Aorta (tissue), 5 donors: ENCODE measurements at regions of chr3 and their contacts with region 1.

Region 1: GRCh38 chr3:100047455-100048141 is 66.7 kb downstream of the FILIP1L start:
- DNase-seq: peak in 1 of 2 donors; percentile 42
- ATAC-seq: peak; percentile 17
- H3K4me3 ChIP-seq: no peak overlapping the region
- H3K27ac ChIP-seq: peak overlapping the region in 1 of 2 donors; percentile 26
- H3K4me1 ChIP-seq: peaks cover 0 to 4% of the 10 kb centered on the region in 2 donors
- H3K27me3 ChIP-seq: no peaks in the 10 kb centered on the region

Region 2: DNA sequence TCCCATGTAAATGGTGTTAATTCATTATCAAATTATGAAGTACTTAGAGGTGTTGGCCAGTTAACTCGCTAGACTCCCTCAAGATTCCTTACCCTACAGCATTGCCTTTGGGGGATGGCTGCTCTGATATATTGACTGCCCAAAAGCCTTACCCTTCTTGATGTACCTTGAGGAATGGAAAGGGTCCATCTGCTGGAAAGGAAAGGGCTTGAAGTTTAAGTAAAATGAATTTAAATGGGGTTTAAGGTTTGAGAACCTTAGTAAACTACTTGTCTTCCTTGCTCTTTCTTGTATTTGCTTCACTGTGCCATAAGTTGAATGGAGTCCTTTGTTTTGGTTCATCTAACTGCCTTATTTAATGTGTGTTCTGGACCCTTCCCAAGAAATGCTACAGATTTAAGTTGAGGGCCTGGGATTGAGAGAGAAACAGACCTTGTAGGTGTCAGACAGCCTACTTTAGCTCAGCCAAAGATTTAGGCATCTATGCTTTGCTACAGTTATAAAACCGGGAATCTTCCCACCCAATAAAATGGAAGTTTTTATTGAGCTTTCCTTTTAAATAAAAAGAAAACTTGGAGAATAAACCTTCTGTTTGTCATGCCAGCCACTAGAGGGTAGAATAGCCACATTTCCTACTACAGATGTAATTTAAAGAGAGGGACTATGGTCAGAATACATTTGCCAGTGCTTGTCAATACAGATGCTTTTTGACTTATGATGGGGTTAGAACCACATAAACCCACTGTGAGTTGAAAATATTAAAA is 204.6 kb before region 1 on chr3:
- intact Hi-C with region 1: loop called in 1 of 2 experiments (anchors 5 kb)
- DNase-seq: no peak
- ATAC-seq: peak; percentile 70
- H3K4me3 ChIP-seq: no peak overlapping the region
- H3K27ac ChIP-seq: peak overlapping the region; percentile 63 to 91
- H3K4me1 ChIP-seq: peaks cover 2 to 3% of the 10 kb centered on the region in 2 donors
- H3K27me3 ChIP-seq: no peaks in the 10 kb centered on the region

Region 3: GRCh38 chr3:99866261-99866761 is 181.3 kb before region 1 on chr3:
- intact Hi-C with region 1: loop called (anchors 5 to 10 kb)
- DNase-seq: no peak
- ATAC-seq: no peak
- H3K4me3 ChIP-seq: peak overlapping the region; percentile 31 to 59
- H3K27ac ChIP-seq: peak overlapping the region; percentile 51 to 93
- H3K4me1 ChIP-seq: peaks cover 9 to 22% of the 10 kb centered on the region in 2 donors
- H3K27me3 ChIP-seq: no peaks in the 10 kb centered on the region

Region 4: GRCh38 chr3:99875929-99876841 is 171.4 kb before region 1 on chr3:
- intact Hi-C with region 1: loop called in 1 of 2 experiments (anchors 10 kb)
- DNase-seq: peak; percentile 91 to 94
- ATAC-seq: peak; percentile 94
- H3K4me3 ChIP-seq: peak overlapping the region; percentile 68 to 94
- H3K27ac ChIP-seq: peak overlapping the region; percentile 82 to 94
- H3K4me1 ChIP-seq: no peaks in the 10 kb centered on the region
- H3K27me3 ChIP-seq: no peaks in the 10 kb centered on the region

Region 5: DNA sequence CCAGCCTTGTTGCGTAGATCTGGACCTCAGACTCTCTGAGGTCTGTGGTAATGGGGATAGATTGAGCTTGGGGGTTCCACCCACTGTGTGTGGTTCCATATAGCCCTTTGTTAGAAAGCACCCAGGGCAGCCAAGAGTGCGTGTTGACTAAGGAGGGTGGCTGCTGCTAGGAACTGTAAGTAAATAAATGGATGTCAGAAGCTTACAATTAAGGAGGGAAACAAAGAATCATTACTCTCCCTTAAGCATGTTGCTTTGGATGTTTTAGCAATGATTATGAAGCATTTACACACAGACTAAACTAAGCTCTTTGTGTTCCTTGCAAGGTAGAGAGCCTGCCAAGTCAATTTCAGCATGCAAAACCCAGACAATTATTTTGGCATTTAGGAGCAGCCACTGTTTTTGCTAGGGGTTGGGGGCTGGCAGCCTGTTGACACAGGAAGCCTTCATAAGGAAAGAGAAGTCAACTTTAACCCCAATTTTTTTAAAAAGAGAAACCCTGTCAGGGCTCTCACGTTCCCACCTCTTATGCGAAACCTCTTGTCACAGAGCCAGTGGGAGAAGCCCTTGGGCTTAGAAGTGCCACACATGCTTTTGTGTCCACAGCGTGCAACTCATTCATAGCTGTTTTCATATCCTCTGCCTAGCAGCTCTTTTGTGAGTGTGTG is 102.1 kb before region 1 on chr3:
- intact Hi-C with region 1: loop called (anchors 5 kb)
- DNase-seq: peak in 1 of 2 donors; percentile 53
- ATAC-seq: peak; percentile 37
- H3K4me3 ChIP-seq: no peak overlapping the region
- H3K27ac ChIP-seq: peak overlapping the region; percentile 90 to 98
- H3K4me1 ChIP-seq: peaks cover 2 to 5% of the 10 kb centered on the region in 2 donors
- H3K27me3 ChIP-seq: no peaks in the 10 kb centered on the region

Region 6: GRCh38 chr3:99965077-99965476 is 82.5 kb before region 1 on chr3:
- intact Hi-C with region 1: loop called in 1 of 2 experiments (anchors 5 kb)
- DNase-seq: no peak
- ATAC-seq: no peak
- H3K4me3 ChIP-seq: no peak overlapping the region
- H3K27ac ChIP-seq: peak overlapping the region in 1 of 2 donors; percentile 98
- H3K4me1 ChIP-seq: peaks cover 7 to 8% of the 10 kb centered on the region in 2 donors
- H3K27me3 ChIP-seq: no peaks in the 10 kb centered on the region

Region 7: GRCh38 chr3:99984139-99984538 is 63.5 kb before region 1 on chr3:
- intact Hi-C with region 1: no loop called
- DNase-seq: no peak
- ATAC-seq: no peak
- H3K4me3 ChIP-seq: no peak overlapping the region
- H3K27ac ChIP-seq: no peak overlapping the region
- H3K4me1 ChIP-seq: no peaks in the 10 kb centered on the region
- H3K27me3 ChIP-seq: no peaks in the 10 kb centered on the region

Region 8: GRCh38 chr3:100080573-100080972 is 33.0 kb after region 1 on chr3:
- intact Hi-C with region 1: loop called in 1 of 2 experiments (anchors 5 kb)
- DNase-seq: no peak
- ATAC-seq: peak; percentile 82
- H3K4me3 ChIP-seq: no peak overlapping the region
- H3K27ac ChIP-seq: peak overlapping the region; percentile 97
- H3K4me1 ChIP-seq: peaks cover 9% of the 10 kb centered on the region in 2 donors
- H3K27me3 ChIP-seq: no peaks in the 10 kb centered on the region